Left cardiac atrium (tissue), 4 donors: ENCODE measurements at regions of chr10 and their contacts with region 1.

Region 1: GRCh38 chr10:68550747-68551411 is 9.3 kb upstream of the TET1 start:
- DNase-seq: no peak
- ATAC-seq: peak; percentile 61 to 73

Region 2: GRCh38 chr10:68576118-68576517 is 25.2 kb after region 1 on chr10:
- intact Hi-C with region 1: no loop called
- DNase-seq: no peak
- ATAC-seq: no peak

Region 3: DNA sequence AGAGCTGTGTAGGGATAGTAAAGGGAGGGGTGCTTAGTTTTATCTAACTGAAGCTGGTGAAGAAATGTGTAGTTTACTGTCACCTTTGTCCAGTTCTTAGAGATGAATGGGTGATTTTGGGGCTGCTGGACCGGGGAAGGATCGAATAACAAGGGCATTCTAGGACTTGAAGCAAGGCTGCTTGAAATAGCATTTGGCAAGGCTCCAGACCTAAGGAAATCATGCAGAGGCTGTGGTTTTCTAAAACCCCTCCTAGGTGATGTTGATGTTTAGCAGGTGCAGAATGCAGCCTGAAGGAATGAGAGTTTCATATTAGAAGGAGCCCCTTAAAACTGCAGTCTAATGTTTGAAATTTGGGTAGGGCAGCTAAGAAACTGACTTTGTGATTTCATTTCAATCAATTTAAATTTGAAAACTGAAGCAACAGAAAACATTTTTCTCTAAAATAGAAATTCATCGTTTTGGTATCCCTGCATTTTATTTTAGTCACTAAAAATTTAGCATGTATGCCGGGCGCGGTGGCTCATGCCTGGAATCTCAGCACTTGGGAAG is 77.8 kb after region 1 on chr10:
- intact Hi-C with region 1: no loop called
- DNase-seq: no peak
- ATAC-seq: no peak

Region 4: DNA sequence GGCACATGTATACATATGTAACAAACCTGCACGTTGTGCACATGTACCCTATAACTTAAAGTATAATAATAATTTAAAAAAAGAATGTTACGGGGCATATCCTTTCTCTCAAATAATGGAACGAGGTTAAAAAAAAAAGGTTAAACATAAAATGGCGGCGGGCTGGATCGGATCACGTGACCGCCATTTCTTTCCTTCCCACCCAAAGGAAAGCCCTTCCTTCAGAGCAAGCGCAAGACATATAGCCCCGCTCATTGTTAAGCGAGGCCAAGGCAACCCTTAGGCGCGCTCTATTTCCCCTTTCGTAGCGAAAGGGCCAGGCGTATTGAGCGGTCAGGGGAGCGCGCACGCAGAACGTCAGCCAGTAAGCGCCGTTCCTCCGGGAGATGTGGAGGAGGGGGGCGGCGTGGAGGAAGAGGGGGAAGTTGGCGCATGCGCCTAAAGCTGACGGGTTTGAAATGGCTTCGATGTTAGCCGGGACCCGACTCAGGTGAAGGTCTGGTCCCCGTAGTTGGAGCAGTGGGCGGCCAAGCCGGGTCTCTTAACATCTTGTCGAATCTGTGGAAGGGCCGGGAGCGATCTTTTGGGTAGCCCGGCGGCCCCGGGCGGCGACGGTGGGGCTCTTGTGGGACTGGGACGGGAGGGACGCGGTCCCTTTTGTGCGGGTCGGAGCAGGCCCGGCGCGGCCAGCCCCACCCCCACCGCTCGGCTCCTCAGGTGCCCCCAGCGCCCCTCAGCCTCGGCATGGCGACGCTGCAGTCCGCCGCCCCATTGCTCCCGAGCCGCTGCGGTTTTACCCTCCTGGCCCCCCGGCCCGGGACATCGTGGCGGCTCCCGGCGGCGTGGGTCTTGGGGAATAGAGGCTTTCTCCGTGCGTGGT is 170.2 kb after region 1 on chr10 and contains the start of gene CCAR1:
- intact Hi-C with region 1: loop called (anchors 10 kb)
- DNase-seq: peak; percentile 98
- ATAC-seq: peak; percentile 99
- total RNA-seq, gene CCAR1: 26.0 to 30.5 TPM